GM10248 (cell line): ENCODE measurements at regions of chr1 and their contacts with region 1.

Region 1: DNA sequence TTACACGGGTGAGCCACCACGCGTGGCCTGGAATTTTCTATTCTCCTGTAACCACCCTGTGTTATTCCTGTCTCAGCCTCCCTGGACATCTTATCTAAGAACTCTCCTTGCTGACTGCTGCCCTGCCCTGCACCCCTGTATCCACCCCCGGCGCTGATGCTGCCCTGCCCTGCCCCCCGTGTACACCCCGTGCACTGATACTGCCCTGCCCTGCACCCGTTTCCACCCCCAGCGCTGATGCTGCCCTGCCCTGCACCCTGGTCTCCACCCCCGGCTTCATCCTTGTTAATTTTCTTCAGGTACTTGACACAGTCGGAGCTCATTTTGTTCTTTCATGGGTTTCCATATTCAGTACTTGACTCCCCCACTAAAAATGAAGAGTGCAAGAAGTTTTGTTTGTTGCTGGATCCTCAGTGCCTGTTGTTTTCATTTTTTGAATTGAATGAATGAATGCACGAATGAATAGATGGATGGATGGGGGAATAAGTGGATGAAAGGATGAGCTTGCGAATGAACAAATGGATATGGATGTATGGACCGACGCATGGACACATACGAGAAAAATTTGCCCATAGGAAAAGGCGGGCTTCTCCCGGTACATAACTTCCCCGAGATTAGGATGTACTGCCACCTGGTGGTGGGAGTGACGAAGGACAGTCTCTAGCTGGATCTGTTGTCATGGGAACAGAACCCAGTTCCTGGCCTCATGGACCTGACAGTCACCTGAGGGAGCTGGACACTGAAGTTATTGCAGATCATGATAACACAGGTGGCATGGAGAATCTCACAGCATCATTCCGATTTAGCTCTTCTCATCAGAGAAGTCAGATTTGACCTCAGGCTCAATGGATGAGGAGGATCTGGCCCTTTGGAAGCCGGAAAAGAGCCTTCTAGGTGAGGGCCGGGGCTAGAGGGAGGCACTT is 14.9 kb downstream of the AADACL4 start:
- DNase-seq: peak; percentile 90
- CTCF ChIP-seq: peak; percentile 76

Region 2: DNA sequence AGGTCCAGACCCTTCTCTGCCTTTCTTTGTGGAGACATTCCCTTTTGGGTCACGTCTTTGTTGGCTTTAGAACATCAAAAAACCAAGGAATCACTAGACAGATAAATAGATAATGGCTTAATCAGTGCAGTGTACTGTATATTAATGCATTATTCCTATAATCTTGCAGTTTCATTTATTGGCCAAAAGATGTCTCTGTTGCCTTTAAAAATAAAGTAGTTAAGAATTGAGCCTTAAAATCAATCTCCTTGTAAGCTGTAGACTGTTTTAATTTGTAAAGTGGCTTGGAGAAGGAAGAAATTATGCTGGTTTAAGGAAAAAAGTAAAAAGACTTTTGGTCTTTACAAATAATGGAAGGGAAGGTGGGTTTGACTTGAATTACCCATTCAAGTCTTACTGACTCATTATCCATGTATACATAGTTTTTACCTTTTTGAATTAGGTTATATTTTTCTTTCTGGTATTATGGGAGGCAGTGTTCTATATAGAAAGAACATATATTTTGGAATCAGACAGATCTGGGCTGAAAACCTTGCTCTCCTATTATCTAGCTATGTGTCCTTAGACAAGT is 344.4 kb before region 1 on chr1:
- CTCF ChIA-PET with region 1: interaction called, 34 read pairs
- POLR2A ChIA-PET with region 1: no interaction called
- DNase-seq: peak; percentile 25
- CTCF ChIP-seq: peak; percentile 27

Region 3: GRCh38 chr1:12640237-12640957 is 18.4 kb before region 1 on chr1:
- CTCF ChIA-PET with region 1: interaction called, 18 read pairs
- POLR2A ChIA-PET with region 1: no interaction called
- DNase-seq: no peak
- CTCF ChIP-seq: no peak

Region 4: GRCh38 chr1:12669529-12670068 is 10.8 kb after region 1 on chr1:
- CTCF ChIA-PET with region 1: interaction called, 24 read pairs
- POLR2A ChIA-PET with region 1: no interaction called
- DNase-seq: no peak
- CTCF ChIP-seq: no peak